Pancreas (tissue), 10 donors: ENCODE measurements at regions of chr10 and their contacts with region 1.

Region 1: DNA sequence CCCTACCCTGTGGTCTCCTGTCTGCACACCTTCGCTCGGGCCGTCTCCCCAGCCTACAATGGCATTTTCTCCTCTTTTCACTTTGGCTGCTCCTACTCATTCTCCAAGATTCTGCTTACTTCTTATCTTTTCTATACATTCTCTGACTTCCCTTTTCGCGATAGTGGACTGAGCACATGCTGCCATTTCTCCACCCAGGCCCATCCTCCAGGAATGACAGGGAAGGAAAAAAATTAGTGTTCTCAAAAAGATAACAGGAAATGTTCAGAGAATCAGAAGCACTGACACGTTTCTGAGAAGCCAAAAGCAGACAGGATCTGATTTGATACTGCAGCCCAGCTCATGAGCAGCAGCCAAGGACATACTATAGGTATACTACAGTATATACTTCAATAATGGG is 6.4 kb upstream of the ANXA11 start:
- DNase-seq: no peak
- ATAC-seq: no peak
- H3K4me3 ChIP-seq: no peak overlapping the region
- H3K27ac ChIP-seq: no peak overlapping the region
- H3K4me1 ChIP-seq: no peaks in the 10 kb centered on the region
- H3K27me3 ChIP-seq: no peaks in the 10 kb centered on the region
- CTCF ChIP-seq: no peak

Region 2: GRCh38 chr10:79438021-79438698 is 773.6 kb before region 1 on chr10:
- intact Hi-C with region 1: no loop called
- DNase-seq: peak in 1 of 6 donors; percentile 48
- ATAC-seq: peak in 3 of 4 donors; percentile 10 to 36 (median 32)
- H3K4me3 ChIP-seq: no peak overlapping the region
- H3K27ac ChIP-seq: no peak overlapping the region
- H3K4me1 ChIP-seq: no peaks in the 10 kb centered on the region
- H3K27me3 ChIP-seq: no peaks in the 10 kb centered on the region
- CTCF ChIP-seq: no peak

Region 3: DNA sequence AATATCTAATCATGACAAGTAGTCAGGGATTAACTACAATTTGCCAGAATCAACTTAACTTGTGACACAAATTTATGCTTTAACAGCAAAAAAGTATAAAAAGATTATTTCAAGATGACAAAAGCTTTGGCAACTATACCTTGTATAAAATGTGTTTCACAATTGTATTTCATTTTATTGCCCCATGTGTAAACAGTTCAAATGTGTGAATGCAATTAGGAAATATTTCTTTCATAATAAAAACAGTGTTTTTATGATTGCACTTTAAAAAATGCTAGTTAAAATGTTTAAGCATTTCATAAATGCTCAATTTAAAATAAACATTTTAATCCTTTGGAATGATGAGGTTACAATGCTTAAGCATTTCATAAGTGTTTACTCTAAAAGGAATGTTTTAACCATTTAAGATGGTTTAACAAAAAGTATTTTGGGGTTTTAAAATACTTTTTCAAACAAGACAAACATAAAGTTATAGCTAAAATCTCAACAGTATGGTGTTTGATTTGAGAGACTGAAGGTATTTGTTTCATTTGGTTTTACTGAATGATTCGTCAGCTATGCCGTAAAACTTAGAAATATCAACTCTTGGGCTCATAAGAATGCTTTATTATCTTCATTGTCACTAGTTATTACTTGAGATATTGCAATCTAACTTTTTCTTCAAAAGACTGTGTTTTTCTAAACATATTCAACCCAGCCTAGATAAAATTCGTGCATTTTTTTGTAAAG is 313.0 kb before region 1 on chr10:
- intact Hi-C with region 1: no loop called
- DNase-seq: no peak
- ATAC-seq: no peak
- H3K4me3 ChIP-seq: no peak overlapping the region
- H3K27ac ChIP-seq: no peak overlapping the region
- H3K4me1 ChIP-seq: no peaks in the 10 kb centered on the region
- H3K27me3 ChIP-seq: no peaks in the 10 kb centered on the region
- CTCF ChIP-seq: no peak

Region 4: GRCh38 chr10:80144067-80144695 is 67.6 kb before region 1 on chr10:
- intact Hi-C with region 1: loop called in 1 of 3 experiments (anchors 5 kb)
- DNase-seq: peak in 5 of 6 donors; percentile 37 to 86 (median 56)
- ATAC-seq: peak; percentile 64 to 83 (median 78)
- H3K4me3 ChIP-seq: peak overlapping the region in 2 of 4 donors; percentile 17 to 32
- H3K27ac ChIP-seq: no peak overlapping the region
- H3K4me1 ChIP-seq: peaks cover 0 to 9% (median 5%) of the 10 kb centered on the region in 3 donors
- H3K27me3 ChIP-seq: no peaks in the 10 kb centered on the region
- CTCF ChIP-seq: no peak